Tibial artery (tissue), 4 donors: ENCODE measurements at regions of chr9 and their contacts with region 1.

Region 1: DNA sequence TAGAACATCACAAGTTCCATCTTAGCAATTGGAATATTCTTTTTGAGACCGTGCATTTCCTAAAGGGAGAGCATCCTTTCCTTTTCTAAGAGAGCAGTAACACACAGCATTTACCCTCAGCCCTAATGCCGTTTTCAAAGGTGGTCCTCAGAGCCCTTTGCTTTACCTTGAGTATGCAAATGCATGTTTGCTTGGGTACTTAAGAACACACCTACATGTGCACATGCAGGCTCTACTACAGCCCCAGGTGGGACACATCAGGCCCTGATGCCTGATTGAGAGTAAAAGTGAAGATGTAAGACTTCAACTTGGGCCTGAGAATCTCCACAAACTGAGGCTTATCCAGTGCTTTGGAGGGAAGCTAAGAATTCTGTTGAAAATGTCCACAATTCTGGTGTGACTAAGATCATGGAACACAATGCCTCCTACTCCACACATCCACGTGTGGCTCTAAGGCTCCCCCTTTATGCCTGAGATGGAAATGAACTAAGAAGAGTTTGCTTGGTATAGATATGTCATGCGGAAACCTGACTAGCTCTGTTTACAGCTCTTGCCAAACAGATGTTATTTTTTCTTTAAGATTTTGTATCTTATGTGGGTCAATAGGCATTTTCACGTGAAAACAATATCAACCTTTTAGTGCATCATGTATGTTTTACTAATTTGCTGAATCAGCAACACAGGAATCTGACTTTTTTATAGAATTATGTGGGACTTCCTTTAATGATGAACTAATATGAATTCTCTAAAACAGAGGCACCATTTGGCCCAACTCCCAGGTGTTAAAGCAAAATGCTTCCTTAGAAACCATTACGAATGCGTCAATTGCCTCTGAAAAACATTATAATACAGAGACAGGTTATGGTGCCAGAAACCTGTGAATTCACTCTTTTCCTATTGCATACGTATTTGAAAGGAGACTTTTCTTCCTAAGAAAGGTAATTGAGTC is 48.9 kb upstream of the SLC2A8 start:
- DNase-seq: no peak
- H3K4me3 ChIP-seq: no peak overlapping the region
- H3K27ac ChIP-seq: no peak overlapping the region
- H3K4me1 ChIP-seq: peaks cover 0 to 38% (median 22%) of the 10 kb centered on the region in 4 donors
- H3K27me3 ChIP-seq: no peaks in the 10 kb centered on the region
- CTCF ChIP-seq: peak; percentile 32 to 33

Region 2: GRCh38 chr9:127224178-127224882 is 123.8 kb before region 1 on chr9:
- intact Hi-C with region 1: loop called (anchors 10 kb)
- DNase-seq: peak; percentile 93 to 97
- H3K4me3 ChIP-seq: peak overlapping the region; percentile 90 to 95
- H3K27ac ChIP-seq: peak overlapping the region; percentile 81 to 89
- H3K4me1 ChIP-seq: peaks cover 0 to 49% (median 19%) of the 10 kb centered on the region in 4 donors
- H3K27me3 ChIP-seq: no peaks in the 10 kb centered on the region
- CTCF ChIP-seq: peak; percentile 33 to 42